Left cardiac atrium (tissue), 4 donors: ENCODE measurements at regions of chr14 and their contacts with region 1.

Region 1: DNA sequence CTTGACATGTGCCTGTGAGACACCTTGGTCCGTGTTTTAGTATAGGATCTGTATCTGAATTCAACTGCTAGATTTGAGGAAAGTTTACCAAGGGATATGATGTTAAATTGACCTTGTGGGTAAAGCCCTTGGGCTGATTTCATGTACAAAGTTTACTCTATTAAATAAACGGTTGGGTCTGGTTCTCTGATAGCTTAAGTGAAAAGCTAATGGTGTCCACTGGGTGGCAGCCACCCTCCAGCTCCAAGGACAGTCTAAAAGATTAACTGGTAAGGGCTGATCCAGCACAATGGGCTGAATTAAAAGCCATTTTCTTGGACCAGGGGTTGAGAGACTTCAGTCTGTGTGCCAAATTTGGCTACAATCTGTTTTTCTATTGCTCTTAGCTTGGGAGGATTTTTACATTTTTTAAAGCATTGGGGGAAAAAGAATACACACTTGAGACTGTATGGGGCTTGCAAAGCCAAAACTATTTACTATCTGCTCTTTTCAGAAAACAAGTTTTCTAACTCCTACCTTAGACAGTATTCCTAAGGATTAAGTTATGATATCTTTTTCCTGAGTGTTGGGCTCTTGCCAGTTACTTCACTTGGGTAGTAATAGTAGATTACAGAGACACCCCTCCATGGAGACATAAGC is 116.5 kb downstream of the GPHN start:
- DNase-seq: peak; percentile 41
- ATAC-seq: peak; percentile 86 to 92

Region 2: DNA sequence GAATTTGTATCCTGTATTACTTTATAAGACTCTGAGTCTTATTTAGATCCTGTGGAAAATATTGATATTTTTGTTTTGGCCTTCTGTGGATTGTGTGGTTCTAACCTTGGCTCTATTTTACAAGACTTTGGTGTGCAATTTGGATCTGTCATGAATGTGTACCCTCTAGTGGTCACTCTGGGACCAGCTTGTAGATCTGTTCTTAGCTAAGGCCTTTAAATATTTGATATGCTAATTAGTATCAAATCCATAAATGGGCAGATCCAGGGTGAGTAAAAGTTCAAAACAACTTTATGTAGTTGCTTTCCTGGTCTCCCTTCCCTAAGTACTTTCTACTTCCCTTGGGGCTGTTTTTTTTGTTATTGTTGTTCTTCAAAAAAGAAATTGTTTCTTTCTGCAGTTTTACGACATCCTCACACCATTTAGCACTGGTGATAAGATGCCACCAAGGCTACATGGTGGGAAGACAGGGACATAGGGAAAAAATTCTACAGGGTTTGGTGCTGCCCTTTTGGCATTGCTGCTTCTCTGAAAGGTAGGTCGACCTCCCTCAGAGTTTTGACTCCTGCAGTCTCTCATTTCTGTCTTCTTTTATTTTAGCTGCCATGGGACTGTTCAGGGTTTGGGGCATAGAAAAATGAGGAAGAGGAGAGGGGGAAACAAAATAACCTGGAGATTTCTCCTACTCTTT is 122.0 kb after region 1 on chr14:
- intact Hi-C with region 1: loop called in 1 of 2 experiments (anchors 10 kb)
- DNase-seq: no peak
- ATAC-seq: peak in 1 of 2 donors; percentile 59